Esophagus squamous epithelium (tissue), 5 donors: ENCODE measurements at regions of chr17 and their contacts with region 1.

Region 1: DNA sequence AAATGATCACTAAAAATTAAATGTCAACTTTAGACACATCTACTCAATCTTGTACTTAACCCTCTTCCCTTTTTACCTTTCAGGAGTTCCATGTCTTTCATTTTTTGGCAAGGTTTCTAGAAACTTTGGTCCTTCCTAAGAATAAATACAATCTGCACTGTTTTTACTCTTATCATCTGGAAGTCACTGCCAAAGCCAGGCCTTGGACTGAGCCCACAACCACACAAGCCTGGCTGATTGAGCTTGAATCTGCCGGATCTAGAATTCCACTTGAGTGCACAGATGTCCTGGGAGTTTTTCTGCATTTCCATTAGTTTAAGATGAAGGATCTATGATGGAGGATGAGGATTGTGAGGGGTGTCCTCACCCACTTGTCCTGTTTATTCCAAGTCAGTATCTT is 126.1 kb downstream of the VPS53 start:
- DNase-seq: no peak
- H3K4me3 ChIP-seq: no peak overlapping the region
- H3K27ac ChIP-seq: no peak overlapping the region
- H3K4me1 ChIP-seq: no peaks in the 10 kb centered on the region
- H3K27me3 ChIP-seq: no peaks in the 10 kb centered on the region
- CTCF ChIP-seq: no peak
- POLR2A ChIP-seq: no peak

Region 2: DNA sequence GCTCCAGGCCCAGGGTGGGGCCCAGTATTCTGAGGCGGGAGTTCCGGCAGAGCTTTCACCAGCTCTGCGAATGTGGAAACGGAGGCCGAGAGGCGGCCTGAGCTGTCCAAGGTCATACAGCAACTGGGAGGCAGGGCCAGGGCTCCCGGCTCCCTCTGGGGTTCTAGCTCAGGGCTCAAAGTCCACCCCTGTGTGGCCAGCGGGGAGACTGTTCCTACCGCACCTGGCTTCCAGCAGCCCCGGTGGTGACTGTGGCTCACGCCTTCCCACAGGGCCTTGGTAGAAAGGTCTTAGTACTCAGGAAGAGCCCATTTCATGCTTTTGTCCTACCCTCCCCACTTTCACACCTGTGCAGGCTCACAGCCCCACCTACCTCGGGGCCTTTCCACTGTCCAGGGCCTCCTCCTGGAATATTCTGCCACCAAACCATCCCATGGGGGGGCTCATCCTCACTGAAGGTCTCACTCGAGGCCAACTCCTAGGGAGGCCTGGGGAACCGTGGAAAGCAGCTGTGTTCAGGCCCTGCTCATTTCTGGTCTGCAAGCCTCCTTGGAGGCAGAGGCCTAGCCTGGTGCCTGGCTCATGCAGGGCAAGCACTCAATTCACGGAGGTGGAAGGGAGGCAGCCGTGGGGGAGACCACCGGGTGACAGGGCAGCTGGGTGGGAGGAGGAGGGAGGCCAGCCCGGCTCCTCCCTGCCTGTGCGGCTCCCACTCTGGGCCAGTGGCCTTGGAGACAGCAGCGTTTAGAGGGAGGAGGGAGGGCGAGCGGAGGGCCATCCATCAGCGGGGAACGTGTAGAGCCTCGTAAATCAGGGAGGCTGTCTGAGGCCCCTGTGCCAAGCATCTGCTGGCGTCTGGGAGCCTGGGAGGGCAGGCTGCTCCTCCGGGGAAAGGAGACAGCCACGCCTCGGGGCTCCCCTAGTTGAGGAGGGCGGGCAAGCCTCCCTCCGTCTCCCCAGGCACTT is 394.4 kb before region 1 on chr17:
- intact Hi-C with region 1: no loop called
- DNase-seq: no peak
- H3K4me3 ChIP-seq: no peak overlapping the region
- H3K27ac ChIP-seq: no peak overlapping the region
- H3K4me1 ChIP-seq: peaks cover 0 to 6% (median 1%) of the 10 kb centered on the region in 3 donors
- H3K27me3 ChIP-seq: peaks cover 0 to 38% (median 0%) of the 10 kb centered on the region in 4 donors
- CTCF ChIP-seq: no peak
- POLR2A ChIP-seq: no peak

Region 3: GRCh38 chr17:640436-640835 is 51.9 kb after region 1 on chr17:
- intact Hi-C with region 1: loop called (anchors 10 kb)
- DNase-seq: no peak
- H3K4me3 ChIP-seq: no peak overlapping the region
- H3K27ac ChIP-seq: no peak overlapping the region
- H3K4me1 ChIP-seq: no peaks in the 10 kb centered on the region
- H3K27me3 ChIP-seq: no peaks in the 10 kb centered on the region
- CTCF ChIP-seq: no peak
- POLR2A ChIP-seq: no peak